OCI-LY7 (cell line): ENCODE measurements at regions of chr22 and their contacts with region 1.

Region 1: DNA sequence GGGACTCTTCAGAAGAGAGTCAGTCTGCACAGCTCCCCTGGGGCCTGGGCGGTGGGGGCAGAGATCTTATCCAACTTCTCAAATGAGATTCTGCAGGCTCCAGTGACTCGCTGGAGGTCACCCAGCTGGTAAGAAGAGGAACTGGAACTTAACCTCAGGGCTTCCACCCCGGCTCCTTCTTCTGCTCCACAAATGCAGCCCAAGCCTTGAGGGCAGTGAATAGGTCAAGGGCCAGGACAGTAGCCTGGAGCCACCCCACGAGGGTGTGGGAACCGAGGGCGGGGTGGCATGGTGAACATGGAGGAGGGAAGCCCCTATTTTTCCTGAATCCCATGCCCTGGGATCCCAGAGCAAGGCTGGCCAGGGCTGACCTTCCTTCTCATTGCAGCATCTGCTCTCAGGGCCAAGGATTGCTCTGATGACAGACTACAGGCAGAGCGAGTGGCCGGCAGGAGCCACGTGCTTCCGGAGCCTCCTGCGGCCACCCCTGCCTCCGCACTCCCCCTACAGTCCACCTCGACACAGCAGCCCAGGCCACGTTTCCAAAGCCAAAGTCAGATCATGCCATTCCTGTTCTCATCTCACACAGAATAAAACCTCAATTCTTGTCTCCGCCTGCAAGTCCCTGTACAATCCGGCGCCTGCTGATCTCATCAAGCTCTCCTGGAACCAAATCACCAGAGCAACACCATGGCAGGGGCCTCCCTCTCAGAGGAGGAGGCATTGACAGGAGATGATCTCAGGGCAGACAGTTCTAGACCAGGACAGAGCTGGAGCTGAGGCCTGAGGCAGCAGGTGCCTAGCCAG is 21.1 kb upstream of the UPK3A start:
- DNase-seq: peak; percentile 96
- H3K4me3 ChIP-seq: peak overlapping the region; percentile 53
- H3K27ac ChIP-seq: peak overlapping the region; percentile 93
- H3K4me1 ChIP-seq: peaks cover 58% of the 10 kb centered on the region
- CTCF ChIP-seq: peak; percentile 64

Region 2: DNA sequence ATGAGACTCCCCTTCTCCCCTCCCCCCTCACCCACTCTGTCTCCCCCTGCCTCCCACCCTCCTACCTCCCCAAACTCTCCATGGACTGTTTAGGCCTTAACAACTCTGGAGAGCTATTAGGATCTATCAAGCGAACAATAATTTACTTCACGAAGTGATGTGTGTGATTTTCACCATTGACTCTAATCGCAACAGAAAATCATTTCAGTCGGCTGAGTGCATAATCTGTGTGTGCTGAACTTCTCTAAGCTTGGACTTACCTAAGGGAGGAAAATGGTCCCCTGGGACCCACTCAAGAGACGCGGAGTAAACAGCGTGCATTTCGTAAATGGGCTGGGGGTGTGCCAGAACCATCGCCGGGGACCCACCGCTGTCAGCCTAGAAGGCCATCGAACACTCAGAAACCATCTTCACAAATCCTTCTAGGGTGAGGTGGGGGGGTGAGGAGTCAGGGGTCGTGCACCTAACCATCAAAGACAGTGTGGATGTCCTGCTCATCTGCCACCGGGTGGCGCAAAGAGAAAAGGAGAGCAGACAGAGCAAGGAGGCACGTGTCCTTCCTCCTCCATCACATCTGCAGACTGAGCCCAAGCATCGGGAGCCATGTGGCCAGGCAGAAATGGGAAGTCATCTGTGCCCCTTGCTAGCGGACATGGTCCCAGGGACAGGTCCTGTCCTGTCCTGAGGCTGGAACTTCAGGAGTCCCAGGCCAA is 162.0 kb before region 1 on chr22:
- CTCF ChIA-PET with region 1: no interaction called
- POLR2A ChIA-PET with region 1: no interaction called
- intact Hi-C with region 1: loop called (anchors 5 kb)
- DNase-seq: peak; percentile 77
- H3K4me3 ChIP-seq: no peak overlapping the region
- H3K27ac ChIP-seq: no peak overlapping the region
- H3K4me1 ChIP-seq: peaks cover 6% of the 10 kb centered on the region
- CTCF ChIP-seq: peak; percentile 83

Region 3: GRCh38 chr22:45163451-45164269 is 100.0 kb before region 1 on chr22 and contains the start of gene NUP50:
- CTCF ChIA-PET with region 1: no interaction called
- POLR2A ChIA-PET with region 1: interaction called, 7 read pairs
- intact Hi-C with region 1: loop called (anchors 1 kb)
- DNase-seq: peak; percentile 98
- H3K4me3 ChIP-seq: peak within 1 kb of the TSS; percentile 91
- H3K27ac ChIP-seq: peak within 1 kb of the TSS; percentile 79
- H3K4me1 ChIP-seq: peaks cover 39% of the 10 kb centered on the region
- CTCF ChIP-seq: no peak
- total RNA-seq, gene NUP50: 100 and 107 TPM in 2 replicates

Region 4: GRCh38 chr22:45179276-45180044 is 84.2 kb before region 1 on chr22:
- CTCF ChIA-PET with region 1: no interaction called
- POLR2A ChIA-PET with region 1: no interaction called
- intact Hi-C with region 1: loop called (anchors 5 kb)
- DNase-seq: no peak
- H3K4me3 ChIP-seq: no peak overlapping the region
- H3K27ac ChIP-seq: no peak overlapping the region
- H3K4me1 ChIP-seq: no peaks in the 10 kb centered on the region
- CTCF ChIP-seq: no peak

Region 5: GRCh38 chr22:45235101-45235777 is 28.4 kb before region 1 on chr22:
- CTCF ChIA-PET with region 1: interaction called, 6 read pairs
- POLR2A ChIA-PET with region 1: interaction called, 6 read pairs
- intact Hi-C with region 1: loop called (anchors 1 kb)
- DNase-seq: peak; percentile 90
- H3K4me3 ChIP-seq: peak overlapping the region; percentile 61
- H3K27ac ChIP-seq: peak overlapping the region; percentile 91
- H3K4me1 ChIP-seq: peaks cover 80% of the 10 kb centered on the region
- CTCF ChIP-seq: no peak

Region 6: DNA sequence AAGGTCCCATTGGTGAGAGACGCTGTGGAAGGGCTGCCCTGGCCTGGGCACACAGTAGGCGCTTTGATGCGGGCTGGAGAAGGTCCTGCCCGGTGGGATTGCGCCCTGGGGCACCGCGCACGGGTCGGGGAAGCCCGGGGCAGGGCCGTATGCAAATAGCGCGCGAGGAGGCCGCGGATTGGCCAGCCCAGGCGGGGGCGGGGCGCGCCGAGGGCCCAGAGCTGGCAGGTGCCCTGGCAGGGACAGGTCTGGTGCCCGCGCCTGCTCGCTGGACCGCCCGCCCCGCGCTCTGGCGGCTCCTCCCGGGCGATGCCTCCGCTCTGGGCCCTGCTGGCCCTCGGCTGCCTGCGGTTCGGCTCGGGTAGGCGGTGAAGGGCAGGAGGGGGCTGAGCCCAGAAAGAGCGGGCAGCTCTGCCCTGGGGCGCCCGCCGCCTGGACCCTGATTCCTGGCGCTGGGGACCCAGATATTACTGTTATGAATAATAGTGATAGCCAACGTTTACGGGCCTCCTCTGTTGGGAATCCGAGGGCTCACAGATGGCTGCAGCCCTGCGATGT is 21.1 kb after region 1 on chr22 and contains the start of gene UPK3A:
- CTCF ChIA-PET with region 1: no interaction called
- POLR2A ChIA-PET with region 1: interaction called, 5 read pairs
- intact Hi-C with region 1: loop called (anchors 2 kb)
- DNase-seq: no peak
- H3K4me3 ChIP-seq: no peak within 1 kb of the TSS
- H3K27ac ChIP-seq: no peak within 1 kb of the TSS
- H3K4me1 ChIP-seq: peaks cover 23% of the 10 kb centered on the region
- CTCF ChIP-seq: no peak
- total RNA-seq, gene UPK3A: not detected in 2 replicates